Left colon (tissue), 2 donors: ENCODE measurements at regions of chrX and their contacts with region 1.

Region 1: GRCh38 chrX:43557792-43558191 is 98.3 kb upstream of the MAOA start:
- DNase-seq: peak; percentile 35 to 77
- ATAC-seq: no peak

Region 2: DNA sequence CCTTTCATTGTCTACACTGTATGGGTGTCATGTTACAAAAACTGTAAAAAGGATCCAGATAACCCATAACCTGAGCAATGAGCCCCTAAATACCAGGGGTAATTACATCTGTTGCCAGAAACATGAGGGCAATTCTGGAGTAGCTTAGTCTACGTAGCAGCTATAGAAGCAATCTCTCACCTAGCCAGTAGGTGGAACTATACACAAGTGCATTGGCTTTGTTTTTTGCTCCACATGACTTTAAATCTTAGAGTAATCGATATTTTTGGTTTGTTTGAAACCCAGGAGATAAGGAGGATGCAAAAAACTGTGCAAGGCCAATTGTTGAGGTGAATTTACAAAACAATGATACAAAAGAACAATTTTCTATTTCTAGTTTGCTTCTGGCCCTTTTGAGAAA is 1776.3 kb before region 1 on chrX:
- intact Hi-C with region 1: loop called in 1 of 2 experiments (anchors 10 kb)
- DNase-seq: no peak
- ATAC-seq: peak; percentile 79

Region 3: GRCh38 chrX:43750248-43750676 is 192.5 kb after region 1 on chrX:
- intact Hi-C with region 1: loop called in 1 of 2 experiments (anchors 2 kb)
- DNase-seq: peak; percentile 47 to 50
- ATAC-seq: peak; percentile 78